Activated CD4-positive, alpha-beta memory T cell treated with anti-CD3 and anti-CD28 coated beads for 36 hours (primary cell): ENCODE measurements at regions of chr20 and their contacts with region 1.

Region 1: GRCh38 chr20:407133-407952 is 756 bp upstream of the RBCK1 start:
- DNase-seq: peak; percentile 77
- H3K4me3 Mint-ChIP-seq: peak overlapping the region; percentile 79
- H3K27ac Mint-ChIP-seq: peak overlapping the region; percentile 82
- H3K4me1 Mint-ChIP-seq: peaks cover 39% of the 10 kb centered on the region
- H3K27me3 Mint-ChIP-seq: no peaks in the 10 kb centered on the region

Region 2: GRCh38 chr20:297098-297924 is 110.0 kb before region 1 on chr20 and contains the start of gene ZCCHC3:
- CTCF ChIA-PET with region 1: no interaction called
- POLR2A ChIA-PET with region 1: interaction called, 3 read pairs
- intact Hi-C with region 1: loop called (anchors 2 kb)
- DNase-seq: peak; percentile 89
- H3K4me3 Mint-ChIP-seq: peak within 1 kb of the TSS; percentile 88
- H3K27ac Mint-ChIP-seq: peak within 1 kb of the TSS; percentile 96
- H3K4me1 Mint-ChIP-seq: peaks cover 42% of the 10 kb centered on the region
- H3K27me3 Mint-ChIP-seq: no peaks in the 10 kb centered on the region
- total RNA-seq, gene ZCCHC3: 15.2 to 15.9 TPM

Region 3: GRCh38 chr20:381581-382290 is 25.6 kb before region 1 on chr20:
- CTCF ChIA-PET with region 1: no interaction called
- POLR2A ChIA-PET with region 1: interaction called, 3 read pairs
- intact Hi-C with region 1: loop called (anchors 1 kb)
- DNase-seq: peak; percentile 89
- H3K4me3 Mint-ChIP-seq: peak overlapping the region; percentile 76
- H3K27ac Mint-ChIP-seq: peak overlapping the region; percentile 84
- H3K4me1 Mint-ChIP-seq: peaks cover 13% of the 10 kb centered on the region
- H3K27me3 Mint-ChIP-seq: no peaks in the 10 kb centered on the region

Region 4: GRCh38 chr20:431012-431904 is 23.9 kb after region 1 on chr20:
- CTCF ChIA-PET with region 1: interaction called, 8 read pairs
- POLR2A ChIA-PET with region 1: interaction called, 3 read pairs
- intact Hi-C with region 1: loop called (anchors 2 kb)
- DNase-seq: peak; percentile 65
- H3K4me3 Mint-ChIP-seq: no peak overlapping the region
- H3K27ac Mint-ChIP-seq: peak overlapping the region; percentile 91
- H3K4me1 Mint-ChIP-seq: peaks cover 43% of the 10 kb centered on the region
- H3K27me3 Mint-ChIP-seq: no peaks in the 10 kb centered on the region

Region 5: DNA sequence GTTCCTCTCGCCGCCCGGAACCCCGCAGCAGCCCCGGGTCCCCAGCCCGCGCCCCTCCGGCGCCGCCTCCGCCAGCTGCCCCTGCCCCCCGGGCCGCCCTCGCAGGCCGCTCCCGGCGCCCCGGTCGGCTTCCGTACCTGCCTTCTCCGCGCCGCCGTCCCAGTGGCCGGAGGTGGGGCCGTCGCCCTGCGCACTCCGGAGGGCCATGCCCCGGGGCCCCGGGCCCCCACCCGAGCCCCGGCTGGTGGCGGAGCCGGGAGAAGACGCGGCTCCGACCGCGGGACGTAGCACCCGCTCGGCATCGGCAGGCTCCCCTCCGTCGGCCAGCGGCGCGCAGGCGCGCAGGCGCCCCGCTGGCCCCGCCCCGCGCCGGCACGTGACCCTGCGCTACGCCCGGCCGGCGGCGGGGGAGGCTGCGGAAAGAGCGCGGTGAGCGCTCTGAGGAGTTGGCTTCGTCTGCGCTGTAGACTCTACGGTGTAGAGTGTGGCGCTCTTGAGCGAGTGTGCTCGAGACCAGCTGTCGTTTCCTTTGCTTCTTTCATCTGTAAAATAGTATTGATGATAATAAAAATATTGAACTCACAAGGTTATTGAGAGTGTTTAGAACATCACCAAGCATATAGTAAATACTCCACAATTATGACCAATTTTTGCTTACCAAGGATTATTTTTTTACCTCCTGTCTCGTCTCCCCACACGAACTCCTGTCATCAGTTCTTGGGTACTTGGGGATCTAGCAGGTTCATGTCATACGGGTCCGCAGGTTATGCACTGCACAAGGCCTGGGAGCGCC is 55.1 kb after region 1 on chr20 and contains the start of gene TBC1D20:
- CTCF ChIA-PET with region 1: interaction called, 13 read pairs
- POLR2A ChIA-PET with region 1: interaction called, 11 read pairs
- intact Hi-C with region 1: no loop called
- DNase-seq: peak; percentile 88
- H3K4me3 Mint-ChIP-seq: peak within 1 kb of the TSS; percentile 86
- H3K27ac Mint-ChIP-seq: peak within 1 kb of the TSS; percentile 84
- H3K4me1 Mint-ChIP-seq: peaks cover 38% of the 10 kb centered on the region
- H3K27me3 Mint-ChIP-seq: no peaks in the 10 kb centered on the region
- total RNA-seq, gene TBC1D20: 18.8 to 20.4 TPM

Region 6: DNA sequence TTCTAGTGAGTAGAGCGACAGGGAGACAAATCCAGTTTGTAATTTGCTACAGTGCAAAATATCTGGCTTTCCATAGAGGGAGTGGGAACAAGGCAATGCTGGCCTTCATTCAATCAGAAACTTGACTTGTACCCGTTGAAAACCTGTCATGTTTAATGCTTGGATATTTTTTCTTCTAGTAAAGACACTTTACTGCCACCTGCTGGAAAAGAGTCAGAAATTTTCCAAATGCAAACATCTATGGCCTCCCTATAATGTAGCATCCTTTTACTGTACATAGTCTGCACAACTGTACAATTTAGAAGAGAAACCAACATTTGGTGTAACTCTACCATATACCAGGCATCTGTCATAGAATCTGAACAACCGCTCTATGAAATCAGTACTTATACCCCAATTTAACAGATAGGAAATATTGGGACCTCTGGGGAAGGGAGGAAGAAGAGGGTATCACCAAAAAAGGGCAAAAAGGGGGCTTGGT is 71.6 kb after region 1 on chr20:
- CTCF ChIA-PET with region 1: interaction called, 16 read pairs
- POLR2A ChIA-PET with region 1: no interaction called
- intact Hi-C with region 1: loop called (anchors 1 kb)
- DNase-seq: no peak
- H3K4me3 Mint-ChIP-seq: no peak overlapping the region
- H3K27ac Mint-ChIP-seq: no peak overlapping the region
- H3K4me1 Mint-ChIP-seq: peaks cover 12% of the 10 kb centered on the region
- H3K27me3 Mint-ChIP-seq: no peaks in the 10 kb centered on the region

Region 7: GRCh38 chr20:543369-544152 is 136.2 kb after region 1 on chr20 and contains the start of gene CSNK2A1:
- CTCF ChIA-PET with region 1: no interaction called
- POLR2A ChIA-PET with region 1: no interaction called
- intact Hi-C with region 1: loop called (anchors 2 kb)
- DNase-seq: peak; percentile 97
- H3K4me3 Mint-ChIP-seq: peak within 1 kb of the TSS; percentile 85
- H3K27ac Mint-ChIP-seq: peak within 1 kb of the TSS; percentile 96
- H3K4me1 Mint-ChIP-seq: peaks cover 48% of the 10 kb centered on the region
- H3K27me3 Mint-ChIP-seq: peaks cover 4% of the 10 kb centered on the region
- total RNA-seq, gene CSNK2A1: 154 to 155 TPM

Region 8: GRCh38 chr20:709423-709822 is 302.1 kb after region 1 on chr20:
- CTCF ChIA-PET with region 1: no interaction called
- POLR2A ChIA-PET with region 1: no interaction called
- intact Hi-C with region 1: no loop called
- DNase-seq: no peak
- H3K4me3 Mint-ChIP-seq: no peak overlapping the region
- H3K27ac Mint-ChIP-seq: no peak overlapping the region
- H3K4me1 Mint-ChIP-seq: no peaks in the 10 kb centered on the region
- H3K27me3 Mint-ChIP-seq: peaks cover 25% of the 10 kb centered on the region